Posterior cingulate gyrus (tissue), 11 donors: ENCODE measurements at regions of chr12 and their contacts with region 1.

Region 1: GRCh38 chr12:42482445-42483237 is 106.9 kb downstream of the PRICKLE1 start:
- DNase-seq: peak; percentile 36 to 94 (median 65)

Region 2: DNA sequence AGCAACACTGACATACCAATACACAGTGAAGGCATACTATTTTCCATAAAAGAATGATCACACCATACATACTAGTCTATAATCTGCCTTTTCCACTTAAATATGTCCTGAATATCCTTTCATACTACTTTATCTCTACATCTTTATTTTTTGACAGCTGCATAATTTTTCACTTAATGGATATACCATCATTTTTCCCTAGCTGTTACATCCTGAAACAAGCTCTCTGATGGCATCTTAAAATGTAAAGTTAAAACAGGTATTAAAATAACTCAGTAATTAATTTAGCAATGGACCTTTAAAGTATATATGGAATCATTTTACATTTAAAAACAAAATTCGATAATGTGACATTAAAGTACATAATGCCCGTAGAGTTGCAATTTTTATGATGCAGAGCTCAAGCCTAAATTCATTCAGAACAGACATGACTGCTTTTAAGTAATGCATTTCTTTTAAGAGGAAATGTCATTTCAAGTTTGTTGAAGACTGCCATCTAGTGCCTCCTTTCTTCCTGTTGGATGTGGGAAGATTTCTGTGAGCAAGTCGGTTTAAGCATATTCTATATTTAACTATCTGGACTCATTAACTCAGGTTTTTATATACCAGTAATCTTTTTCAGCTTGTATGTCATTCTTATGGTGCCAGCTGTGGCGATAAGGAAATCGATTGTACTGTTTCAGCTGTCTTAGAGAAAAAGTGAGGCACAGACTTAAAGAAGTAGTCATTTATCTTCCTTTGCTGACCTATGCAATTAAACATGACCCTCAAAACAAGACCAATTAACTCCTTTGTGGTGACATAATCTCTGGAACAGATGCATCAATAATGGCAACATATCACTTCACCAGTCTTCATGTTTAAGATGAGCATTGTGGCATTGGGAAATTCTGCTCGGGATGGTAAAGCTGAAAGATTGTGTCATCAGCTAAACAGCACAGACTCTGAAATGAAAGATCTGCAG is 86.6 kb after region 1 on chr12:
- intact Hi-C with region 1: loop called (anchors 2 kb)
- DNase-seq: no peak

Region 3: DNA sequence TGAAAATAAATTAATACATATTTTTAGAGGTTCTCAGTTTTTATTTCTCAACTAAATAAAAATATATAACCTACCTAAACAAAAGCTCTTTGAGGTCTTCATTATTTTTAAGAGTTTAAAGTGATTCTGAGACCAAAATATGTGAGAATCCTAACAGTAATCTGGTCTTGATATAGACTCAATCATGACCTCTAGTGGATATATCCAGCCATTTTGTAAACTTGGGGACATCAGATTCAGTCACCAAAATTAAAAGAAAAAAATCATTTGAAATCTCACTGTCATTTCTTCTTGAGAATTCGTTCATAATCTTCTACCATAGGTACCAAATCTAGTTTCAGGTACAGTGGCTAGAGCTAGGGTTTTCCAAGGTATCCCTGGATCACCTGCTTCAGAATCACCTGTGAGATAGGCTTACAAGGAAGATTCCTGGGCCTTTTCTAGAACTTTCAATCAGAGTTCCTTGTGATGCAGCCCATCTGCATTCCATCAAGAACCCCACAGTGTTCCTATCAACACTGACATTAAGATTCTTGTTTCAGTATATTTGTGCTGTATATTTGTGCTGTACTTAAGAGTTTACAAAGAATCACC is 854.4 kb after region 1 on chr12:
- intact Hi-C with region 1: loop called (anchors 2 kb)
- DNase-seq: no peak